K562 (cell line): ENCODE measurements at regions of chr1 and their contacts with region 1.

Region 1: GRCh38 chr1:165597883-165598675 is 33.0 kb upstream of the MGST3 start:
- DNase-seq: peak; percentile 98 to 99 (median 98)
- ATAC-seq: peak; percentile 99
- H3K4me3 ChIP-seq: peak overlapping the region; percentile 47
- H3K27ac ChIP-seq: peak overlapping the region; percentile 67
- H3K4me1 ChIP-seq: peaks cover 3 to 9% of the 10 kb centered on the region in 2 experiments; a peak in 4 of 5 replicates
- H3K27me3 ChIP-seq: 0 out of 5 replicates have a peak, but pooled peaks cover 0 to 4% of the 10 kb centered on the region in 2 experiments
- CTCF ChIP-seq: 0 out of 6 replicates have a peak, but pooled peaks of 1 of the 3 experiments have one; percentile 1
- EP300 ChIP-seq: peak; percentile 6; the same call in 1 of the 2 replicates
- POLR2A ChIP-seq: peak; percentile 67
- RAD21 ChIP-seq: no peak

Region 2: DNA sequence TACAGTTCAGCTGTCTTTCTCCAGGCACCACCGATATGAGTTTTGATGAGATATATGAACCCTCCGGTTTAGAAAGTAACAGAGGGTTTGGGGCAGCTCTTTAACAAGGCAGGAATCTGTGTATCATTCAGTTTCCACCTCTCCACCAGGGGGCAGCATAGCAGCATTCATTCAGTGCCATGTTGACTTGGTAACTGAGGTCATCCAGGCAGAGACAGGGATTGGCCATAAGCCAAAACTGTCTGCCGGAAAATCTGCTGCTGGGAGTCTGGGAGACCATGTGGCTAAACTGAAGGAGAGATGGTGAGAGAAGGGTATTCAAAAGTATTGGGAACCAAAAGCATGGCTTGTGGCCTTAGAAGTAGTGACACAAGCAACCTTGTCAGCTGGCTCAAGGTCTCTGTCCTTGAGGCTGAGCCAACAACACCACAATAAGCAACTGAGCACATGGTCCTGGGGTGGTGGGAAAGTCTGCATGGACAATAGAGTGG is 340.1 kb before region 1 on chr1:
- CTCF ChIA-PET with region 1: interaction called, 4 read pairs
- POLR2A ChIA-PET with region 1: no interaction called
- in situ Hi-C with region 1: no loop called
- intact Hi-C with region 1: loop called (anchors 2 kb)
- DNase-seq: peak; percentile 74 to 79 (median 77)
- ATAC-seq: peak; percentile 95
- H3K4me3 ChIP-seq: no peak overlapping the region
- H3K27ac ChIP-seq: no peak overlapping the region
- H3K4me1 ChIP-seq: no peaks in the 10 kb centered on the region
- H3K27me3 ChIP-seq: no peaks in the 10 kb centered on the region; a peak in 1 of 5 replicates
- CTCF ChIP-seq: peak; percentile 67 to 81 (median 80)
- EP300 ChIP-seq: no peak
- POLR2A ChIP-seq: no peak
- RAD21 ChIP-seq: peak; percentile 34 to 63

Region 3: DNA sequence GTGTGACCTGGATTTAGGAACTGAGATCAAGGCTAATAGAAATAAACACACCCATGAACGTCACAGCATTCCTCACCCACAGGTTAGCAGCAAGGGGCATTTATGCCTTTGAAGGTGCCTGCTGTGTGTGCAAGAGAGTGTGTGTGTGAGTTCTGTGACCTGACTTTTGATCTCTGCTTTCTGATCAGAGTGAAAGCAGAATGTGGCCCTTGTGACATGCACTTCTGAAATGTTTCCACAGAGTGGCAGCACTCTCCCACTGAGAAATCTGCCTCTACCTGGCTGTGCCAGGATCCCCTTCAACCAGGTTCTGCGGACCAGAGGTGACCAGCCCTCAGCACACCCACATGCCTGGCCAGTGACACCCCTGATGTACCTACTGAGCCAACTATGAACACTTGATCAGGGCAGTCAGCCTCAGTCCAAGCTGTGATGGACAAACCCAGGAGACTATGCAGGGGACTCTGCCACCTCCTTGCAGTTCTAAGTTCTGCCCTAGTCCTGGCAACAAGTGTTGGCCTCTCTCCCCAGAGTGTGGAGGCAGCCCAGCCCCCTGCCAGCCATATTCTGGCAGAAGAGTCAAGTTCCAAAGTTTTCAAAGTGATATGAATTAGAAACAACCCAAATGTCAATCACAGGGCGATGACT is 194.1 kb before region 1 on chr1:
- CTCF ChIA-PET with region 1: interaction called, 12 read pairs
- POLR2A ChIA-PET with region 1: interaction called, 3 read pairs
- in situ Hi-C with region 1: no loop called
- intact Hi-C with region 1: loop called (anchors 1 kb)
- DNase-seq: peak; percentile 28 to 39 (median 33)
- ATAC-seq: peak; percentile 81
- H3K4me3 ChIP-seq: no peak overlapping the region
- H3K27ac ChIP-seq: no peak overlapping the region
- H3K4me1 ChIP-seq: no peaks in the 10 kb centered on the region
- H3K27me3 ChIP-seq: peaks cover 4 to 23% of the 10 kb centered on the region in 2 experiments; a peak in 3 of 5 replicates
- CTCF ChIP-seq: peak; percentile 52 to 71 (median 70); a peak in 5 of 6 replicates
- EP300 ChIP-seq: no peak
- POLR2A ChIP-seq: no peak
- RAD21 ChIP-seq: peak; percentile 36 to 74

Region 4: GRCh38 chr1:165697881-165698760 is 100.0 kb after region 1 on chr1 and contains the start of gene ALDH9A1:
- CTCF ChIA-PET with region 1: no interaction called
- POLR2A ChIA-PET with region 1: interaction called, 5 read pairs
- in situ Hi-C with region 1: no loop called
- intact Hi-C with region 1: loop called (anchors 5 kb)
- DNase-seq: peak; percentile 93 to 97 (median 96)
- ATAC-seq: peak; percentile 96
- H3K4me3 ChIP-seq: peak within 1 kb of the TSS; percentile 93
- H3K27ac ChIP-seq: peak within 1 kb of the TSS; percentile 82
- H3K4me1 ChIP-seq: peaks cover 6 to 7% of the 10 kb centered on the region in 2 experiments
- H3K27me3 ChIP-seq: no peaks in the 10 kb centered on the region; a peak in 1 of 5 replicates
- CTCF ChIP-seq: peak; percentile 45 to 64 (median 47)
- EP300 ChIP-seq: no peak
- POLR2A ChIP-seq: peak; percentile 95
- RAD21 ChIP-seq: peak; percentile 22 to 55
- polyA plus RNA-seq, gene ALDH9A1: 26.5 to 35.0 TPM

Region 5: GRCh38 chr1:165827268-165828102 is 229.4 kb after region 1 on chr1 and contains the start of gene UCK2:
- CTCF ChIA-PET with region 1: no interaction called
- POLR2A ChIA-PET with region 1: no interaction called
- in situ Hi-C with region 1: no loop called
- intact Hi-C with region 1: loop called (anchors 1 kb)
- DNase-seq: peak; percentile 89 to 92 (median 91)
- ATAC-seq: peak; percentile 88
- H3K4me3 ChIP-seq: peak within 1 kb of the TSS; percentile 78
- H3K27ac ChIP-seq: peak within 1 kb of the TSS; percentile 95
- H3K4me1 ChIP-seq: peaks cover 8 to 16% of the 10 kb centered on the region in 2 experiments
- H3K27me3 ChIP-seq: no peaks in the 10 kb centered on the region; a peak in 1 of 5 replicates
- CTCF ChIP-seq: peak; percentile 0 to 33 (median 26); a peak in 3 of 6 replicates
- EP300 ChIP-seq: no peak
- POLR2A ChIP-seq: peak; percentile 77
- RAD21 ChIP-seq: peak in 1 of 2 experiments; percentile 41
- polyA plus RNA-seq, gene UCK2: 84.6 to 86.7 TPM